CD14-positive monocyte (primary cell): ENCODE measurements at regions of chr19 and their contacts with region 1.

Region 1: GRCh38 chr19:18919086-18919899 is at the starts of genes COPE and DDX49:
- DNase-seq: peak; percentile 99 to 100 (median 100)
- H3K4me3 ChIP-seq: peak within 1 kb of the TSS; percentile 86 to 98 (median 91)
- H3K4me3 Mint-ChIP-seq: peak within 1 kb of the TSS; percentile 92 to 94
- H3K27ac ChIP-seq: peak within 1 kb of the TSS; percentile 71 to 94
- H3K27ac Mint-ChIP-seq: peak within 1 kb of the TSS; percentile 93 to 97 (median 95)
- H3K4me1 ChIP-seq: peaks cover 21 to 26% of the 10 kb centered on the region in 2 donors
- H3K4me1 Mint-ChIP-seq: peaks cover 26% of the 10 kb centered on the region
- H3K27me3 ChIP-seq: no peaks in the 10 kb centered on the region
- H3K27me3 Mint-ChIP-seq: peaks cover 0 to 2% (median 0%) of the 10 kb centered on the region in 3 donors
- CTCF ChIP-seq: no peak
- polyA plus RNA-seq, gene COPE: 331 to 345 (median 345) TPM
- polyA plus RNA-seq, gene DDX49: 24.0 to 40.3 (median 27.5) TPM

Region 2: GRCh38 chr19:17419621-17420466 is 1499.4 kb before region 1 on chr19 and contains the start of gene MVB12A:
- intact Hi-C with region 1: loop called in 1 of 2 experiments (anchors 5 kb)
- DNase-seq: peak; percentile 96 to 99 (median 97)
- H3K4me3 ChIP-seq: peak within 1 kb of the TSS; percentile 65 to 83 (median 76)
- H3K4me3 Mint-ChIP-seq: peak within 1 kb of the TSS; percentile 81 to 94
- H3K27ac ChIP-seq: peak within 1 kb of the TSS; percentile 59 to 83
- H3K27ac Mint-ChIP-seq: peak within 1 kb of the TSS; percentile 83 to 97 (median 94)
- H3K4me1 ChIP-seq: peaks cover 15 to 26% of the 10 kb centered on the region in 2 donors
- H3K4me1 Mint-ChIP-seq: peaks cover 23% of the 10 kb centered on the region
- H3K27me3 ChIP-seq: no peaks in the 10 kb centered on the region
- H3K27me3 Mint-ChIP-seq: peaks cover 0 to 2% (median 0%) of the 10 kb centered on the region in 3 donors
- CTCF ChIP-seq: no peak
- polyA plus RNA-seq, gene MVB12A: 43.2 to 47.8 (median 43.7) TPM

Region 3: DNA sequence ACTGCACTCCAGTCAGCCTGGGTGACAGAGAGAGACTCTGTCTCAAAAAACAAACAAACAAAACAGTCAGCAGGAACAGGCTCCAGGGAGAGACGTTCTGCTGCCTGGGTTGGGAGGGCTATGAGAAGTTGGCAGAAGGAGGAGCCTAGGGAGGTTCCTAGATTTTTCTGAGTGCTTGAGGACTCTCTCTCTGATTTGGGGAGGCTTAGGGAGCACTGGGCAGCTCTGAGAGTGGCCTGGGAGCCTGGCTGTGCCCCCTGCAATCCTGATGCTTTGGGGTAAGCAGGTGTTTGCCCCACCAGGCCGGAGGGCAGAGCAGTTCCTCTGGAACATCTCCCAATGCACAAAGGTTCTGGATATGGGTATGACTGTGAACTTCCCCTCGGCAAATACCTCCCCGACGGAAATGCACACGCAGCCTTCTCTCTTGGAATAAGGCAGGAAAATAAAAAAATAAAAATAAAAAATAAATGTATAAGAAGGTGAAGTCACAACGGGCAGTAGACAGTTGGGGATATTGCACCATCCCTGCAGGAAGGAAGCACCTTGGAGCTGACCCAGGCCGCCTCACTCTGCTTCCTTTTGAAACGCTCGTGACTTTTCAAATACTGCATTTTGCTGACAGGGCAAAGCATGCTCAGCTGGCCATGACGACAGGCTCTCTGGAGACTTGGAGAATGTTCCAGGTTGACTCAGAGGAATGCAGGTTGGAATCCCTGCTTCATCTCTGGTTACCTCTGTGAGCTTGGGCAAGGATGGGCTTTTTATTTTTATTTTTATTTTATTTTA is 48.3 kb after region 1 on chr19:
- intact Hi-C with region 1: loop called in 1 of 2 experiments (anchors 1 kb)
- DNase-seq: peak; percentile 83 to 94 (median 93)
- H3K4me3 ChIP-seq: peak overlapping the region in 1 of 3 experiments; percentile 54
- H3K4me3 Mint-ChIP-seq: peak overlapping the region; percentile 16 to 84
- H3K27ac ChIP-seq: peak overlapping the region; percentile 93 to 97
- H3K27ac Mint-ChIP-seq: peak overlapping the region; percentile 97 to 99 (median 98)
- H3K4me1 ChIP-seq: peaks cover 65 to 70% of the 10 kb centered on the region in 2 donors
- H3K4me1 Mint-ChIP-seq: peaks cover 53% of the 10 kb centered on the region
- H3K27me3 ChIP-seq: no peaks in the 10 kb centered on the region
- H3K27me3 Mint-ChIP-seq: peaks cover 0 to 1% (median 1%) of the 10 kb centered on the region in 3 donors
- CTCF ChIP-seq: no peak

Region 4: DNA sequence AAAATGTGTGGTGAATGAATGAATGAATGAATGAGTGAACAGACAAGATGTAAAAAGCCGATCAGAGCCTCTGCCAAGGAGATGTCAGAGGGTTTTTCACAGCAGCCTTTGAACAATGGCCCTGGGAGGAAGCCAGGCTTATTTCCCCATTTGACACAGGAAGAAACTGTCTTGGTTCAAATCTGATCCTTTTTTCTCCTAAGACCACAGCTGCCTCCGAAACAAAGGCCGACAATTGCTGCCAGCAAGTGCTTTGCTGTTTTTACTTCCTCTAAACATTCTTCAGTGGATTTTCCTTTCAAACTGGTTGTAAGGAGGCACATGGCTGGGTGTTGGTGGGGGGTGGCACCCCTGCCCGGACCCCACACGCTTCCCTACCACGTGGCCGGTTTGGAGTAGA is 66.0 kb after region 1 on chr19:
- intact Hi-C with region 1: loop called in 1 of 2 experiments (anchors 1 kb)
- DNase-seq: peak; percentile 70 to 83 (median 75)
- H3K4me3 ChIP-seq: peak overlapping the region in 1 of 3 experiments; percentile 16
- H3K4me3 Mint-ChIP-seq: peak overlapping the region; percentile 39 to 43
- H3K27ac ChIP-seq: peak overlapping the region; percentile 77 to 82
- H3K27ac Mint-ChIP-seq: peak overlapping the region; percentile 85 to 96 (median 93)
- H3K4me1 ChIP-seq: peaks cover 32 to 37% of the 10 kb centered on the region in 2 donors
- H3K4me1 Mint-ChIP-seq: peaks cover 35% of the 10 kb centered on the region
- H3K27me3 ChIP-seq: no peaks in the 10 kb centered on the region
- H3K27me3 Mint-ChIP-seq: peaks cover 0 to 3% (median 0%) of the 10 kb centered on the region in 3 donors
- CTCF ChIP-seq: no peak

Region 5: GRCh38 chr19:19028526-19028925 is 109.2 kb after region 1 on chr19:
- intact Hi-C with region 1: loop called in 1 of 2 experiments (anchors 1 kb)
- DNase-seq: no peak
- H3K4me3 ChIP-seq: no peak overlapping the region
- H3K4me3 Mint-ChIP-seq: no peak overlapping the region
- H3K27ac ChIP-seq: no peak overlapping the region
- H3K27ac Mint-ChIP-seq: no peak overlapping the region
- H3K4me1 ChIP-seq: peaks cover 13 to 15% of the 10 kb centered on the region in 2 donors
- H3K4me1 Mint-ChIP-seq: peaks cover 12% of the 10 kb centered on the region
- H3K27me3 ChIP-seq: no peaks in the 10 kb centered on the region
- H3K27me3 Mint-ChIP-seq: no peaks in the 10 kb centered on the region
- CTCF ChIP-seq: no peak

Region 6: GRCh38 chr19:19033426-19034203 is 114.3 kb after region 1 on chr19 and contains the starts of genes ARMC6 and SUGP2:
- intact Hi-C with region 1: loop called in 1 of 2 experiments (anchors 1 kb)
- DNase-seq: peak; percentile 81 to 84 (median 82)
- H3K4me3 ChIP-seq: peak within 1 kb of the TSS; percentile 74 to 93 (median 88)
- H3K4me3 Mint-ChIP-seq: peak within 1 kb of the TSS; percentile 80 to 93
- H3K27ac ChIP-seq: peak within 1 kb of the TSS; percentile 70 to 85
- H3K27ac Mint-ChIP-seq: peak within 1 kb of the TSS; percentile 87 to 98 (median 95)
- H3K4me1 ChIP-seq: peaks cover 24 to 35% of the 10 kb centered on the region in 2 donors
- H3K4me1 Mint-ChIP-seq: peaks cover 30% of the 10 kb centered on the region
- H3K27me3 ChIP-seq: no peaks in the 10 kb centered on the region
- H3K27me3 Mint-ChIP-seq: no peaks in the 10 kb centered on the region
- CTCF ChIP-seq: no peak
- polyA plus RNA-seq, gene ARMC6: 22.3 to 29.6 (median 26.1) TPM
- polyA plus RNA-seq, gene SUGP2: 7.6 to 143 (median 8.2) TPM

Region 7: GRCh38 chr19:19063183-19064097 is 144.1 kb after region 1 on chr19 and contains the start of gene SLC25A42:
- intact Hi-C with region 1: no loop called
- DNase-seq: peak; percentile 97 to 98 (median 98)
- H3K4me3 ChIP-seq: peak within 1 kb of the TSS; percentile 49 to 71 (median 59)
- H3K4me3 Mint-ChIP-seq: peak within 1 kb of the TSS; percentile 83 to 95
- H3K27ac ChIP-seq: peak within 1 kb of the TSS in 1 of 2 donors; percentile 11
- H3K27ac Mint-ChIP-seq: peak within 1 kb of the TSS; percentile 48 to 92 (median 76)
- H3K4me1 ChIP-seq: peaks cover 20 to 26% of the 10 kb centered on the region in 2 donors
- H3K4me1 Mint-ChIP-seq: peaks cover 28% of the 10 kb centered on the region
- H3K27me3 ChIP-seq: no peaks in the 10 kb centered on the region
- H3K27me3 Mint-ChIP-seq: peaks cover 0 to 4% (median 2%) of the 10 kb centered on the region in 3 donors
- CTCF ChIP-seq: no peak
- polyA plus RNA-seq, gene SLC25A42: 0.68 to 3.1 (median 1.1) TPM